H1 (cell line): ENCODE measurements at regions of chr1 and their contacts with region 1.

Region 1: GRCh38 chr1:39189592-39190041 is 14.9 kb upstream of the MACF1 start:
- DNase-seq: no peak
- H3K4me3 ChIP-seq: no peak overlapping the region
- H3K27ac ChIP-seq: no peak overlapping the region
- H3K4me1 ChIP-seq: peaks cover 0 to 8% (median 1%) of the 10 kb centered on the region in 4 experiments; a peak in 3 of 7 replicates
- H3K27me3 ChIP-seq: no peaks in the 10 kb centered on the region
- CTCF ChIP-seq: no peak
- EP300 ChIP-seq: no peak
- POLR2A ChIP-seq: no peak
- RAD21 ChIP-seq: no peak

Region 2: GRCh38 chr1:39098546-39099250 is 90.9 kb before region 1 on chr1:
- CTCF ChIA-PET with region 1: interaction called, 130 read pairs
- POLR2A ChIA-PET with region 1: interaction called, 12 read pairs
- DNase-seq: peak; percentile 75 to 89
- H3K4me3 ChIP-seq: no peak overlapping the region
- H3K27ac ChIP-seq: peak overlapping the region; percentile 21; the same call in 1 of the 2 replicates
- H3K4me1 ChIP-seq: peaks cover 7 to 13% (median 12%) of the 10 kb centered on the region in 4 experiments
- H3K27me3 ChIP-seq: no peaks in the 10 kb centered on the region
- CTCF ChIP-seq: peak; percentile 40 to 88 (median 88)
- EP300 ChIP-seq: peak in 1 of 2 experiments; percentile 39; a peak in 1 of 3 replicates
- POLR2A ChIP-seq: no peak
- RAD21 ChIP-seq: peak; percentile 98 to 99

Region 3: GRCh38 chr1:39142401-39143151 is 47.0 kb before region 1 on chr1:
- CTCF ChIA-PET with region 1: interaction called, 40 read pairs
- POLR2A ChIA-PET with region 1: interaction called, 8 read pairs
- DNase-seq: no peak
- H3K4me3 ChIP-seq: peak overlapping the region in 1 of 4 experiments; percentile 18; a peak in 1 of 8 replicates
- H3K27ac ChIP-seq: peak overlapping the region; percentile 71
- H3K4me1 ChIP-seq: peaks cover 6 to 23% (median 15%) of the 10 kb centered on the region in 4 experiments; a peak in 6 of 7 replicates
- H3K27me3 ChIP-seq: no peaks in the 10 kb centered on the region
- CTCF ChIP-seq: no peak
- EP300 ChIP-seq: no peak
- POLR2A ChIP-seq: peak in 1 of 2 experiments; percentile 48; a peak in 1 of 3 replicates
- RAD21 ChIP-seq: no peak

Region 4: DNA sequence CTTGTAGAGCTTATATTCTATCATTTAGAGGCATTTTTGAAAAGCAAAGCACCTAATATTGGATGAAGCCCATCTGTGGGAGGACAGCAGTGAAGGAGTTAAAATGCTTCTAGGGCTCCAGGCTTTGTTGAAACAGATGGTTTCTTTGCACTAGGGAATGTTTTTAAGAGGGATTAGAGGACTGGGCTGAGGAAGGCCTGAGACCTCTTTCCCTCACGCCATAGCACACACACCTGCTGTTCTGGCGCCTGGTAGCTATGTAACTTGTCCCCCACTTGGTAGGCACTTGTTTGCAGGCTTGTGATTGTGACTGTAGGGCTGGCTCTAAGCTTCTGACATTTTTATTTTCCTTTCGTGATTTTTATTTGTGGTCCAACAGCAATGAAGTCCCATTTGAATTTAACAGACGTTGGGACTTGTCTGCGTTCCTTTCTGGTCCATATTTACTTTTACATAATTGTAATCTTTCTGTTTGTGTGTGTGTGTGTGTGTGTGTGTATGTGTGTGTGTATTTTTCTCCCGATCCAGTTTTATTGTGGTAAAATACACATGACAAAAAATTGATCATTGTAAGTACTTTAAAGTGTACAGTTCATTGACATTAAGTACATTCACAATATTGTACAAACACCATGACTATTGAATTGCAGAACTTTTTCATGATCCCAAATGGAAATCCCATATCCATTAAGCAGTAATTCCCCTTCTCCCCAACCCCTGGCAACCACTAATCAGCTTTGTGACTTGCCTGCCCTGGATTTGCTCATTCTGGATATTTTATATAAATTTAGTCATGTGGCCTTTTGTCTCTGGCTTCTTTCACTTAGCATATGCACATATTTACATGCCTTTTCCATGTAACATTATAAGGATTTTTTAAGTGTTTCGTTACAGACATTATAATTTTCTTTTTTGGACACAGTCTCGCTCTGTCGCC is 18.6 kb before region 1 on chr1:
- CTCF ChIA-PET with region 1: interaction called, 86 read pairs
- POLR2A ChIA-PET with region 1: interaction called, 5 read pairs
- DNase-seq: no peak
- H3K4me3 ChIP-seq: no peak overlapping the region
- H3K27ac ChIP-seq: peak overlapping the region; percentile 8; the same call in 1 of the 2 replicates
- H3K4me1 ChIP-seq: peaks cover 3 to 21% (median 16%) of the 10 kb centered on the region in 4 experiments; a peak in 6 of 7 replicates
- H3K27me3 ChIP-seq: no peaks in the 10 kb centered on the region
- CTCF ChIP-seq: no peak
- EP300 ChIP-seq: peak in 1 of 2 experiments; percentile 64; a peak in 1 of 3 replicates
- POLR2A ChIP-seq: peak in 1 of 2 experiments; percentile 34; a peak in 1 of 3 replicates
- RAD21 ChIP-seq: peak in 1 of 2 experiments; percentile 18; a peak in 1 of 4 replicates

Region 5: GRCh38 chr1:39220891-39221870 is 31.6 kb after region 1 on chr1:
- CTCF ChIA-PET with region 1: interaction called, 72 read pairs
- POLR2A ChIA-PET with region 1: interaction called, 3 read pairs
- DNase-seq: peak in 1 of 2 experiments; percentile 39
- H3K4me3 ChIP-seq: no peak overlapping the region; a peak in 1 of 8 replicates
- H3K27ac ChIP-seq: no peak overlapping the region
- H3K4me1 ChIP-seq: peaks cover 0 to 8% (median 7%) of the 10 kb centered on the region in 4 experiments; a peak in 5 of 7 replicates
- H3K27me3 ChIP-seq: no peaks in the 10 kb centered on the region
- CTCF ChIP-seq: no peak
- EP300 ChIP-seq: no peak
- POLR2A ChIP-seq: no peak
- RAD21 ChIP-seq: no peak